ENCODE measurements at regions of chr7 and their contacts with region 1.

Region 1: GRCh38 chr7:876167-876967 is at the start of gene GET4:
- DNase-seq: peak; percentile 98
- ATAC-seq: peak; percentile 79
- H3K4me3 Mint-ChIP-seq: peak within 1 kb of the TSS; percentile 91
- H3K27ac Mint-ChIP-seq: peak within 1 kb of the TSS; percentile 87
- H3K4me1 Mint-ChIP-seq: peaks cover 35% of the 10 kb centered on the region
- H3K27me3 Mint-ChIP-seq: no peaks in the 10 kb centered on the region
- CTCF ChIP-seq: no peak
- total RNA-seq, gene GET4: 40.5 and 41.4 TPM in 2 replicates

Region 2: GRCh38 chr7:362402-363096 is 513.8 kb before region 1 on chr7:
- CTCF ChIA-PET with region 1: no interaction called
- POLR2A ChIA-PET with region 1: no interaction called
- intact Hi-C with region 1: no loop called
- DNase-seq: no peak
- ATAC-seq: peak; percentile 39
- H3K4me3 Mint-ChIP-seq: peak overlapping the region; percentile 75
- H3K27ac Mint-ChIP-seq: peak overlapping the region; percentile 15
- H3K4me1 Mint-ChIP-seq: peaks cover 52% of the 10 kb centered on the region
- H3K27me3 Mint-ChIP-seq: peaks cover 49% of the 10 kb centered on the region
- CTCF ChIP-seq: no peak

Region 3: GRCh38 chr7:519484-520390 is 356.6 kb before region 1 on chr7 and contains the start of gene PDGFA:
- CTCF ChIA-PET with region 1: no interaction called
- POLR2A ChIA-PET with region 1: no interaction called
- intact Hi-C with region 1: loop called (anchors 10 kb)
- DNase-seq: peak; percentile 47
- ATAC-seq: peak; percentile 15
- H3K4me3 Mint-ChIP-seq: peak within 1 kb of the TSS; percentile 82
- H3K27ac Mint-ChIP-seq: no peak within 1 kb of the TSS
- H3K4me1 Mint-ChIP-seq: peaks cover 30% of the 10 kb centered on the region
- H3K27me3 Mint-ChIP-seq: peaks cover 8% of the 10 kb centered on the region
- CTCF ChIP-seq: no peak
- total RNA-seq, gene PDGFA: 6.0 and 7.3 TPM in 2 replicates

Region 4: GRCh38 chr7:786472-787255 is 89.7 kb before region 1 on chr7:
- CTCF ChIA-PET with region 1: interaction called, 25 read pairs
- POLR2A ChIA-PET with region 1: no interaction called
- intact Hi-C with region 1: no loop called
- DNase-seq: peak; percentile 63
- ATAC-seq: peak; percentile 98
- H3K4me3 Mint-ChIP-seq: no peak overlapping the region
- H3K27ac Mint-ChIP-seq: no peak overlapping the region
- H3K4me1 Mint-ChIP-seq: no peaks in the 10 kb centered on the region
- H3K27me3 Mint-ChIP-seq: no peaks in the 10 kb centered on the region
- CTCF ChIP-seq: no peak

Region 5: DNA sequence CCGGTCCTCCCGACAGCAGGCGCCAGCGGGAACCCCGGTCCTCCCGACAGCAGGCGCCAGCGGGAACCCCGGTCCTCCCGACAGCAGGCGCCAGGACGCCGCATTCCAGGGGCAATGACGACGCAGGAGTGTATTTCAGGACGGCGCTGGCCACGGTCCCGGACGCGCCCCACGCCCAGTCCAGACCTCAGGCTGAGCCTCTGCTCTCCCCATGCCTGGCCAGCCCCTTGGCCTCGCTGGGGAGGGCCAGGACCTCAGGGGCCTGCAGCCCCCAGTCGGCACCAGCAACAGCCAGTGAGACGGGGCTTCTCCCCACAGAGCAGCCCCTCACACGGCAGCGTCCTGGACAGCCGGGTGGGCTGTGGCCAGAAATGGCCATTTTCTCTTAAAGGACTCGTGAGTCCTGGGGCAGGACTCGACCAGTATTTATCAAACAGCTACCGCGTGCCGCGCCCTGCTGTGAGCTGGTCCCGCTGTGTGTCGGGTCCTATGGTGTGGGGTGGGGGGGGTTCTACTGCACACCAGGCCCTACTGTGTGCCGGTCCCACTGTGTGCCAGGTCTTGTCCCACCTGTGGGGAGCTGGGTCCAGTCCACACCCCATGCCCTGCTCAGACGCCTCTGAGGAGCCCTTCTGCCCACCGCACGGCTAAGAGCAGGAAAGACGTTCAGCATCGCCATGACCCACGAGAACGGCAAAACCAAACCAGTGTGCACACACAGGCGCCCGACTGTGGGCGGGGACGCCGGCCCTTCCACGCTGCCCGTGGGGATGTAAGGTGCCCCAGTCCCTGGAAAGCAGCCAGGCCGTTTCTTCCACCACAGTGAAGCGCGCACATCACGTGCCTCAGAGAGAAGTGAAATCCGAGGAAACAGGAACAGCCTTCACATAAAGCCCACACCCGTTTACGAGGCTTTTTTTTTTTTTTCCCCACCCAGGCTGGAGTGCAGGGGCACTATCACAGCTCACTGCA is 33.3 kb after region 1 on chr7:
- CTCF ChIA-PET with region 1: no interaction called
- POLR2A ChIA-PET with region 1: no interaction called
- intact Hi-C with region 1: loop called (anchors 2 kb)
- DNase-seq: peak; percentile 59
- ATAC-seq: peak; percentile 51
- H3K4me3 Mint-ChIP-seq: peak overlapping the region; percentile 74
- H3K27ac Mint-ChIP-seq: no peak overlapping the region
- H3K4me1 Mint-ChIP-seq: peaks cover 15% of the 10 kb centered on the region
- H3K27me3 Mint-ChIP-seq: peaks cover 2% of the 10 kb centered on the region
- CTCF ChIP-seq: no peak

Region 6: DNA sequence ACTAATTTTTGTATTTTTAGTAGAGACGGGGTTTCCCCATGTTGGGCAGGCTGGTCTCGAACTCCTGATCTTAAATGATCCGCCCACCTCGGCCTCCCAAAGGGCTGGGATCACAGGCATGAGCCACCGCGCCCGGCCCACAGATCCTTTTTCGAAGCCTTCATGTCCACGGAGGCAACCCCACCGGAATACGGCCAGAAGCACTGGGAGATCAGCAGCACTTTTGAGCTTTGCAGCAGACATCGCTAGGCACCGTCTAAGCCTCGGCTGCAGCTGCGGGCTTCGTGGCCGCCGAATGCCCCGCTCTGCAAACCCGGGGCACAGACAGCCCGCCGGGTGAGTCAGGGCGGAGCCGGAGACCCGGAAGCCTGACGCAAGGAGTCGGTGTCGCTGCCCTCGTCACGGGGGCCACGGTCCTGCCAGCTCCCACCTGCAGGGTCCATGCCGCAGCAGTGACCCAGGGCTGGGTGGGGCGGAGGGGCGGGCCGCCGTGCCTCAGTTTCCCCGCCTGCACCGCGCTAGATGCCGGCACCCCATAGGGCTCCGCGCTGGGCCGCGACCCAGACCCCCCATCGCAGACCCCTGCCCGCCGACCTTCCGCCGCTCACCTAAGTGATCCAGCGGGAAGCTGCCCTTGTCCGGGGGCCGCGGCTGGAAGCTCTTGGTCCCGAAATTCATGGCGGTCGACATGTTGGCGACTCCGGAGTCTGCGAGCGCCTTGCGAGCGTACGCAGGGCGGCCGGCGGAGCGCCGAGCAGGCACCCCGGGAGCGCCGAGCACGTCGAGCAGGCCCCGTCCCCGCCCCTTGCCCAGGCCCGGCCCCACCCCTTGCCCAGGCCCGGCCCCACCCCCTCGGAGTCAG is 98.7 kb after region 1 on chr7 and contains the start of gene COX19:
- CTCF ChIA-PET with region 1: no interaction called
- POLR2A ChIA-PET with region 1: interaction called, 6 read pairs
- intact Hi-C with region 1: loop called (anchors 1 kb)
- DNase-seq: peak; percentile 92
- ATAC-seq: peak; percentile 84
- H3K4me3 Mint-ChIP-seq: peak within 1 kb of the TSS; percentile 91
- H3K27ac Mint-ChIP-seq: peak within 1 kb of the TSS; percentile 86
- H3K4me1 Mint-ChIP-seq: peaks cover 33% of the 10 kb centered on the region
- H3K27me3 Mint-ChIP-seq: no peaks in the 10 kb centered on the region
- CTCF ChIP-seq: no peak
- total RNA-seq, gene COX19: 21.2 and 24.5 TPM in 2 replicates

Measured in activated B cell treated with CpG ODN at 0.5 μM for 24 hours (primary cell).